Activated naive CD4-positive, alpha-beta T cell treated with anti-CD3 and anti-CD28 coated beads for 36 hours (primary cell): ENCODE measurements at regions of chr1 and their contacts with region 1.

Region 1: GRCh38 chr1:46667782-46668760 is at the start of gene ATPAF1:
- DNase-seq: peak; percentile 83
- H3K4me3 Mint-ChIP-seq: no peak within 1 kb of the TSS
- H3K27ac Mint-ChIP-seq: peak within 1 kb of the TSS; percentile 9
- H3K4me1 Mint-ChIP-seq: peaks cover 15% of the 10 kb centered on the region
- H3K27me3 Mint-ChIP-seq: no peaks in the 10 kb centered on the region
- total RNA-seq, gene ATPAF1: 44.5 to 49.2 TPM

Region 2: DNA sequence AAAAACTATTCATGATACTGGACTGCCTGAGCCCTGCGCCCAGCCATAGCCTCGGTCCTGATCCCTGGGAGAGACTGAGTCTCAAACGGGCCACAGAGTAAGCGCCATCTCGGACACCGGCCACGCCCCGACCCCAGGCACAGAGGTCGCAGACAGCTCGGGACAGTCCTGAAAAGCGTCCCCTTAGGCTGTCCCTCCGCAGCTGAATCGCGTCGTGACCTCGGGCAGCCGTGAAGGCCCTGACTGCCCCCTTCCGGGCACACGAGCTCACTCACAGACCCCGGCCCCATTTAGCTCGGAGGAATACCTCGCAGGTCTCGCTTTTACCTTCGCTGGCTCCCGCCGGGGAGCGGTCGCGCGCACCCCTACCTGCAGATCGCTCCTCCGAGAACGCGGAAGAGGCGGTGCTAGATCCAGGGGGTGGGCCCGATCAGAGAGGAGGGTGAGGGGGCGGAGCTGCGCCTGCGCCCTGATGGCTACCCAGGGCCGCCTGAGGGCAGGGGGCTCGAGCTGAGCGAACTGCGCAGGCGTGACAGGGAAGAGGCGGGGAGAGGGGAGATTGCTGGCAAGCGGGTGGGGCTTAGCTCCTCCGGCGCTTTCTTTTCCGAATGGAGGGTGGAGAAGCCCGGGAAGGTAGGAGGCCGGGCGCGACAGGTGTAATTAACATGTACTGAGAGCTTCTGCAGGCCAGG is 64.1 kb before region 1 on chr1 and contains the start of gene MKNK1:
- CTCF ChIA-PET with region 1: no interaction called
- intact Hi-C with region 1: loop called (anchors 1 kb)
- DNase-seq: peak; percentile 98
- H3K4me3 Mint-ChIP-seq: peak within 1 kb of the TSS; percentile 92
- H3K27ac Mint-ChIP-seq: peak within 1 kb of the TSS; percentile 87
- H3K4me1 Mint-ChIP-seq: peaks cover 49% of the 10 kb centered on the region
- H3K27me3 Mint-ChIP-seq: no peaks in the 10 kb centered on the region
- total RNA-seq, gene MKNK1: 18.5 to 21.2 TPM

Region 3: GRCh38 chr1:46699666-46700065 is 31.6 kb after region 1 on chr1:
- CTCF ChIA-PET with region 1: no interaction called
- intact Hi-C with region 1: no loop called
- DNase-seq: no peak
- H3K4me3 Mint-ChIP-seq: no peak overlapping the region
- H3K27ac Mint-ChIP-seq: no peak overlapping the region
- H3K4me1 Mint-ChIP-seq: peaks cover 9% of the 10 kb centered on the region
- H3K27me3 Mint-ChIP-seq: no peaks in the 10 kb centered on the region